Activated T-helper 1 cell treated with anti-CD3 and anti-CD28 coated beads, Interleukin-12 subunit alpha, Interleukin-12 subunit beta, Interleukin-2, Interleukin-4 antibody, amounts not matched to agents 30 ng/mL and 10 ng/mL and 1 ng/mL, durations not matched to agents 14 hours and 24 hours and 36 hours (primary cell): ENCODE measurements at regions of chr14 and their contacts with region 1.

Region 1: GRCh38 chr14:91872517-91873470 is 5.5 kb upstream of the TC2N start:
- DNase-seq: no peak
- H3K4me3 Mint-ChIP-seq: peak overlapping the region; percentile 75
- H3K27ac Mint-ChIP-seq: peak overlapping the region; percentile 92
- H3K4me1 Mint-ChIP-seq: peaks cover 97% of the 10 kb centered on the region
- H3K27me3 Mint-ChIP-seq: peaks cover 2% of the 10 kb centered on the region

Region 2: DNA sequence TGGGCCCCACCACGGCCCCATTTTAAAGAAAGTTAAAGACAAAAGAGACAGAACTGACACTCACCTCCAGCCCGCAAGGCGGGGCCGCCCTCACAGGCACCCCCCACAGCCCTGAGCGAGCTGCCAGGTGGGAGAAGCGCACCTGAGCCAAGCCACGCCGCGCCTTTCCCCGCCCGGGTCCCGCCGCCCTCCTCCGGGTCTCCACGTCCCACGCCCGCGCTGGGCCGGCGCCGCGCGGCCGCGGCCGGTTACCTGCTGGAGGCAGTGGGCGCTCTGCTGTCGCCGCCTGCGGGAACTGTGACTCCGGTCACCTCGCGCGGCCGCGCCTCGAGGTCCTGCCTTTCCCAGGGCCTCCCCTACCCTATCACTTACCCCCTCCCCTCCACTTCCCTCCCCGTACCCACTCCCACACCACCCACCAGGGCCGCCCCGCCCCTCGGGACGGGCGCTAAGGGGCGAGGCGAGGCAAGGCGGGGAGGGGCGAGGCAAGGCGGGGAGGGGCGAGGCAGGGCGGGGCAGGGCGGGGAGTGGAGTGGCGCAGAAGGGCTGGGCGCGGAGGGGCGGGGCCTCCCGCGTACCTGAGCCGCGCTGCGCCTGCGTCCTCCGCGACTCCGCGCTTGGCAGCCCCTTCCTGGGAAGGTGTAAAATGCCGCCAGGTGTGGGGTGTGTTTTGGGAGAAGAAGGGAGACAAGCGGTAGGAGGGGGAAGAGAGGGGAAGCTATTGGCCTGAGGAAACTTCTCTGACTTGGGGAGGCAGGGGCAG is 36.5 kb before region 1 on chr14:
- intact Hi-C with region 1: loop called (anchors 2 kb)
- DNase-seq: peak; percentile 49
- H3K4me3 Mint-ChIP-seq: peak overlapping the region; percentile 85
- H3K27ac Mint-ChIP-seq: no peak overlapping the region
- H3K4me1 Mint-ChIP-seq: peaks cover 67% of the 10 kb centered on the region
- H3K27me3 Mint-ChIP-seq: no peaks in the 10 kb centered on the region

Region 3: DNA sequence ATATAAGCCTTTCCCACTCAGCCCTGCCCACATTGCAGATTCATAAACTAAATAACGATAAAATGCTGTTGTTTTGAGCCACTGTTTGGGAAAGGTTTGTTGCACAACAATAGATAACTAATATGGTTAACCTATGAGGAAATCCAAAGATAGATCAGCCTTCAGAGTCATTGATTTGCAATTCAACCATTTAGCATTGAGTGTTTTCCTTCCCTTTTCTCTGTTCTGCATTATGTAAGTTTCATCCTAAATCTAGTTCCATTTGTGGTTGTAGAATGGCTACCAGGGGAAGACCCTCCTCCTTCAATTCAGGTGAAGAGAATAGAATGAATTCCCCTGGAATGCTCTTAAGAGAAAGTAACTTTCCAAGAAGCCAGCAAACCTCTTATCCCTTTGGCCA is 25.1 kb before region 1 on chr14:
- intact Hi-C with region 1: no loop called
- DNase-seq: no peak
- H3K4me3 Mint-ChIP-seq: no peak overlapping the region
- H3K27ac Mint-ChIP-seq: no peak overlapping the region
- H3K4me1 Mint-ChIP-seq: peaks cover 17% of the 10 kb centered on the region
- H3K27me3 Mint-ChIP-seq: no peaks in the 10 kb centered on the region

Region 4: DNA sequence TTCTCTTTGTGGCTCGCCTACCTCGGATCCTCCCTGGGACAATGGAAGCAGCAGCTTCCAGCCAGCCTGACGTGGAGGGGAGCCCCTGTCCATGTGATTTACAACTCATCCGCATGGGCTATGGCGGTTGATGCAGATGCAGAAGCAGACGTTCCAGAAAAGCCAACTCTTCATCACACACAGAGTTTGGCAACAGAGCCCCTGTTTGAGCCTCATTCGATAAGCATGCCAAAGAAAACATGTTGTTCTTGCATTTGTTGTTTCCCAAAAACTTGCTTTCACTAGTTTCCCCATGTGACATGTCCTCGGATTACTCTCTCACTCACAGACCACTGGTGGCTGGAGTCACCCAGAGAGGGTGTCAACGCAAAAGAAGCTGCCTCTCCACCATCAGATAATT is 11.0 kb after region 1 on chr14:
- intact Hi-C with region 1: loop called (anchors 1 kb)
- DNase-seq: no peak
- H3K4me3 Mint-ChIP-seq: no peak overlapping the region
- H3K27ac Mint-ChIP-seq: no peak overlapping the region
- H3K4me1 Mint-ChIP-seq: peaks cover 34% of the 10 kb centered on the region
- H3K27me3 Mint-ChIP-seq: peaks cover 3% of the 10 kb centered on the region

Region 5: GRCh38 chr14:91911474-91912032 is 38.8 kb after region 1 on chr14:
- intact Hi-C with region 1: loop called (anchors 2 kb)
- DNase-seq: peak; percentile 35
- H3K4me3 Mint-ChIP-seq: no peak overlapping the region
- H3K27ac Mint-ChIP-seq: no peak overlapping the region
- H3K4me1 Mint-ChIP-seq: peaks cover 15% of the 10 kb centered on the region
- H3K27me3 Mint-ChIP-seq: peaks cover 3% of the 10 kb centered on the region

Region 6: GRCh38 chr14:92039719-92040430 is 167.1 kb after region 1 on chr14 and contains the start of gene TRIP11:
- intact Hi-C with region 1: loop called (anchors 2 kb)
- DNase-seq: peak; percentile 94
- H3K4me3 Mint-ChIP-seq: peak within 1 kb of the TSS; percentile 93
- H3K27ac Mint-ChIP-seq: peak within 1 kb of the TSS; percentile 98
- H3K4me1 Mint-ChIP-seq: peaks cover 38% of the 10 kb centered on the region
- H3K27me3 Mint-ChIP-seq: no peaks in the 10 kb centered on the region
- total RNA-seq, gene TRIP11: 36.5 and 44.4 TPM in 2 replicates

Region 7: GRCh38 chr14:92551044-92551841 is 678.4 kb after region 1 on chr14:
- intact Hi-C with region 1: loop called (anchors 10 kb)
- DNase-seq: no peak
- H3K4me3 Mint-ChIP-seq: no peak overlapping the region
- H3K27ac Mint-ChIP-seq: no peak overlapping the region
- H3K4me1 Mint-ChIP-seq: peaks cover 35% of the 10 kb centered on the region
- H3K27me3 Mint-ChIP-seq: peaks cover 2% of the 10 kb centered on the region